BJ (cell line): ENCODE measurements at regions of chr1 and their contacts with region 1.

Region 1: DNA sequence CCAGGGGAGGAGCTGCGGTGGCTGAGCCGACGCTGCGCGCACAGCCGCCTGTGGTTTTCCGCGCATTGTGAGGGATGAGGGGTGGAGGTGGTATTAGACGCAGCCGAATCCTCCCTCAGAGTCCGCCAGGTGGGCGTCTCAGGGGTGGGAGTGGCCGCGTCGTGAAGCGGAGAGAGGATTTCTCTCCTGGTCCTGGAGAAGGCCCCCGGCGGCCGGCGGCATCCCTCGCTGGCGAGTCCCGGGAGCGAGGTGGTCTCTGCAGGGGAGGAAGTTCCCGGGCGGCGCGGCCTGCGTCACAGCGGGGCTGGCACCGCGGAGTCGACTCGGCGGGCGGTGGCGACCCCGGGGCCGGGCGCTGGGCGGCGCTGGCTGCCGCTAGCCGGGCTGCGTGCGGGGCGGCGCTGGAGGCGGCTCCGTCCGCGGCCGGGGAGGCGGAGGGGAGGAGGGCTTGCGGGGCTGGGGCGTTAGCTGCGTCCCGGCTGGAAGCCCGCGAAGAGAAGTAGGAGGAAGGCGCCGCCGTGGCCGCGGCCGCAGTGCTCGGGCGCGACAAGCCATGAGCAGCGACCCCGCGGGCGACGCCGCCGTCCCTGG is at the start of gene LRRC8C:
- DNase-seq: no peak
- H3K4me3 ChIP-seq: peak within 1 kb of the TSS; percentile 96
- H3K27me3 ChIP-seq: no peaks in the 10 kb centered on the region
- CTCF ChIP-seq: no peak
- polyA plus RNA-seq, gene LRRC8C: 3.6 and 5.7 TPM in 2 replicates

Region 2: GRCh38 chr1:89771991-89772560 is 139.3 kb after region 1 on chr1:
- CTCF ChIA-PET with region 1: interaction called, 3 read pairs
- POLR2A ChIA-PET with region 1: interaction called, 13 read pairs
- DNase-seq: no peak
- H3K4me3 ChIP-seq: no peak overlapping the region
- H3K27me3 ChIP-seq: peaks cover 1% of the 10 kb centered on the region; the same call in 1 of the 2 replicates
- CTCF ChIP-seq: no peak